Mammary epithelial cell (primary cell): ENCODE measurements at regions of chr17 and their contacts with region 1.

Region 1: GRCh38 chr17:49880291-49881053 is 32.6 kb upstream of the TAC4 start:
- DNase-seq: peak; percentile 36
- H3K4me3 ChIP-seq: no peak overlapping the region
- H3K27ac ChIP-seq: no peak overlapping the region
- H3K4me1 ChIP-seq: no peaks in the 10 kb centered on the region
- H3K27me3 ChIP-seq: peaks cover 2% of the 10 kb centered on the region
- CTCF ChIP-seq: peak; percentile 86 to 98

Region 2: DNA sequence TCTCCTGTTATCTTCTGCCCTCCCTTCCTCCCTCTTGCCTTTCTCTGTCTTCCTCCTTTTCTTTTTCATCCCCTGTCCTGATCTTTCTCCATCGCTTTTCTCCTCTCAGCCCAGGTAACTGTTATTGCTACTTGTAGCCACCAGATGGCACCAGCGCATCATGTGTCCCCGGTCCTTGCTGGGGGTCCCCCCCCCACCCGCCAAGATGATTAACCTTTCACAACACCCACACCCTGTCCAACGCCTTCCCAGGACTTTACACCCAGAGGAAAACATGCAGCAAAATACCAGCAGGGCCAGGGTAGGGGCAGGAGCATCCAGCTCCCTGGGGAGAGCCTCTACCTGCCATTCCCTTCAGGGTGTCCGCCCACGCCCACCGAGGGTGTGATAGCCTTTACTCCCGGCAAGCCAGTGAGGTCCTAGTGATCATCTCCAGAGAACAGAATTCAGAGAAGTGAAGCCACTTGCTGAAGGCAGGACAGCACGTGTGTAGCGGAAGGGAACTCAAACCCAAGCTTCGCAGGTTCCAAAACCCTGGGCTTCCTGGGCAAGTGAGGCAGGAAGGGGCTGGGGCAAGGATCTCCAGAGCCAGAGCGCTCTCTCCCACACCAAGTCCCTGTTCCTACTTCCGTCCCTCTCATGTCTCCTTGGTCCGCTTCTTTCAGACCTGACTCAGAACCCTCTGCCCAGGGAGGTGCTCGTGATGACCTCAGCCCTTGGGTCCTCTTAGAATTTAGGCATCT is 19.2 kb before region 1 on chr17:
- CTCF ChIA-PET with region 1: no interaction called
- dilution Hi-C with region 1: no loop called
- in situ Hi-C with region 1: no loop called
- intact Hi-C with region 1: no loop called
- DNase-seq: peak; percentile 24
- H3K4me3 ChIP-seq: no peak overlapping the region
- H3K27ac ChIP-seq: no peak overlapping the region
- H3K4me1 ChIP-seq: no peaks in the 10 kb centered on the region
- H3K27me3 ChIP-seq: no peaks in the 10 kb centered on the region
- CTCF ChIP-seq: peak; percentile 73 to 91

Region 3: GRCh38 chr17:49899191-49899485 is 18.7 kb after region 1 on chr17:
- CTCF ChIA-PET with region 1: interaction called, 11 read pairs
- dilution Hi-C with region 1: no loop called
- in situ Hi-C with region 1: no loop called
- intact Hi-C with region 1: no loop called
- DNase-seq: no peak
- H3K4me3 ChIP-seq: no peak overlapping the region
- H3K27ac ChIP-seq: no peak overlapping the region
- H3K4me1 ChIP-seq: peaks cover 13% of the 10 kb centered on the region
- H3K27me3 ChIP-seq: peaks cover 4% of the 10 kb centered on the region
- CTCF ChIP-seq: peak in 1 of 2 donors; percentile 32

Region 4: DNA sequence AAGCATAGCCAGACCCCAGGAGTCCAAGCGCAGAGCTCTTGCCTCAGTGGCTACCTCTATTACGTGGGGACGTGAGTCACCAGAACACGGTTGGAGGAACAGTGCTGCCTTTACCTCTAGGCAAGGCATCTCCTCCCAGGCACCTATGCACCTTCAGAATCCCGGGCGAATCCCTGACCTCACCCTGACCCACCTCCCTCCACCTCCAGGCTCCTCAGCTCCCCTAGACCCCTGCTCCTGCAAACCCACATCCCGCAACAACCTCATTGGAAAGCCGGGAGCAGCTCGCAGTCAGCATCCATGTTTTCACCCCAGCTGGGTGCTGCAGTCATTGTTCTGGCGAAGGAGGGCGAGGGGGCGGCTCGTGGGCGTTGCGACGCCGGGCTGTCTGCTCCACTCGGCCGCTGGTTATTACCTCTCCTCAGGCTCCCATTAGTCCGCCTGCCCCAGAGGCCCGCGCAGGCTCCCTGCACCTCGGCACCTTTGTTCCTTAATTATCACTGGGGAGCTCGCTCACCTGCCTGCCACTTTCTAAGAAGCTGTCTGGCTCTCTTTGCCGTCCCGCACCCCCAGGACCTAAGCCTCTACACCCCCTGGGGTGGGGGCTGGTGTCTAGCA is 63.9 kb after region 1 on chr17:
- CTCF ChIA-PET with region 1: no interaction called
- dilution Hi-C with region 1: no loop called
- in situ Hi-C with region 1: loop called in 1 of 2 experiments (anchors 10 kb)
- intact Hi-C with region 1: no loop called
- DNase-seq: no peak
- H3K4me3 ChIP-seq: no peak overlapping the region
- H3K27ac ChIP-seq: no peak overlapping the region
- H3K4me1 ChIP-seq: no peaks in the 10 kb centered on the region
- H3K27me3 ChIP-seq: peaks cover 8% of the 10 kb centered on the region
- CTCF ChIP-seq: no peak

Region 5: DNA sequence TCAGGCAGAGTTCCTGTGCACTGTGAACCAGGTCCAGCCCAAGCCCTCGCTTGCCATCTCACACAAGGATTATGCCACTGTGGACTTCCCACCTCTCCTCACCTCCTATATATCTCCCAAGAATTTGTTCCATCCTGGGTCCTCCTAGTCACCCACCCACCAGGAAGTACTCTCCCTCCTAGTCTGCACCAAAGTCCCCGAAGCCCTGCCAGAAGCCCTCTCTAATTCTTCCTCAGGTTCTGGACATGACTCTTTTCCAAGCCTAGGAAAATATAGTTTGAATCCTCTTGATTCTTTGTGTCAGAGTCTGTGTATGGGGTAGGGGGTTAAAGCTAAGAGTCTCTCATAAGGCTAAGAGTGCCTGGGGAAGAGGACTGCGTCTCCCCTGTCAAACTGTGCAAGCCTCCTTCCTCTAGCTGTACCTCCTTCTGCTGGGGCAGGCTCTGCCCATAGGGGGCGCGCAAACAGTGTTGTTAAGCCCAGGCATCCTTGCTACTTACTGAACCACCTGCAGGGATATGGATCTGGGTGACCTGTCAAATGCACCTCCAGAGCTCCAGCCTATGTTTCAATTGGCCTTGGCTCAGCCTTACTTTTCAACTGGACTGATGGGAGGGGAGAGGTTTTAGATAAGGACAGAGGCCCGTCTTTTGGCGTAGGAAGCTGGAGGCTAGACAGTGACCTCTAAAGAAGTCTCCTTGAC is 71.9 kb after region 1 on chr17:
- CTCF ChIA-PET with region 1: no interaction called
- dilution Hi-C with region 1: no loop called
- in situ Hi-C with region 1: loop called in 1 of 2 experiments (anchors 10 kb)
- intact Hi-C with region 1: loop called (anchors 1 kb)
- DNase-seq: peak; percentile 66
- H3K4me3 ChIP-seq: no peak overlapping the region
- H3K27ac ChIP-seq: no peak overlapping the region
- H3K4me1 ChIP-seq: no peaks in the 10 kb centered on the region
- H3K27me3 ChIP-seq: peaks cover 4% of the 10 kb centered on the region
- CTCF ChIP-seq: peak; percentile 97 to 99

Region 6: DNA sequence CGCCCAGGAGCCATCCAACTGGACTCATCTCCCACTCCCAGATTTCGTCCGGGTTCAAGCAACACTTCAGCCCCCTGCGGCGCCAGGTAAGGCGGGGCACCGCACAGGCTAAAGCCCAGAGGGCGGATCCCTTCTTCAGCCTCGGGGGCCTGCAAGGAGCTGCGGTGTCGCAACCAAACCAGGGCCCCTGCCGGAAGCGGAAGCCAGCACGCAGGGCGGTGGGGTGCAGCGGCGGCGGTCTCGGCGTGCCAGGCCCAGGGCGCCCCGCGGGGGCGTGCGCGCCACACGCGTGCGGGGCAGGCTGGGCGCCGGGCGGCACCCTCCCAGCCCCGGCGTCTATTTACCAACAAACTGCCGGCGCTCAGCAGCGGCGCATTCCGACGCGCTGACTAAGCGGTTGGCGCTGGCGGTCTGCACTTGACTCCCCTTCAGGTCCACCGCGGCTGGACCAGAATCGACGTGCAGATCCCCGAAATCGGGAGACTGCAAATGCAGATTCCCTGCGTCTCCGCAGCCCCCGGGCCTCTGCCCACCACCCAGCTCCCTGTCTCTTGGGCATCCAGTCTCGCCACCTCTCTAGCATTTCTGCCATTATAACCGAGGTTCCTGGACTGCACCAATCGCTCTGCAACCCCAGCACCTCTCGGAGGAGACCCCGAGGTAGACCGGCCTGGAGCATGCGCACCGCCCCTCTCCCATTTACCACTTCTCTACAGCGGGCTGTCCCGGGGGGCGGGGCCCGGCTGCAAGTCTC is 88.1 kb after region 1 on chr17:
- CTCF ChIA-PET with region 1: no interaction called
- dilution Hi-C with region 1: loop called (anchors 10 kb)
- in situ Hi-C with region 1: no loop called
- intact Hi-C with region 1: no loop called
- DNase-seq: peak; percentile 61
- H3K4me3 ChIP-seq: peak overlapping the region; percentile 13 to 49 (median 43)
- H3K27ac ChIP-seq: no peak overlapping the region
- H3K4me1 ChIP-seq: peaks cover 35% of the 10 kb centered on the region
- H3K27me3 ChIP-seq: peaks cover 71% of the 10 kb centered on the region
- CTCF ChIP-seq: no peak